ENCODE measurements at regions of chr2 and their contacts with region 1.

Region 1: GRCh38 chr2:196076778-196077568 is 8.3 kb upstream of the DNAH7 start:
- DNase-seq: no peak
- H3K4me3 ChIP-seq: no peak overlapping the region
- H3K27ac ChIP-seq: no peak overlapping the region
- H3K4me1 ChIP-seq: no peaks in the 10 kb centered on the region
- H3K27me3 ChIP-seq: peaks cover 7 to 12% of the 10 kb centered on the region in 2 experiments
- CTCF ChIP-seq: no peak
- POLR2A ChIP-seq: no peak

Region 2: GRCh38 chr2:194385376-194385775 is 1691.6 kb before region 1 on chr2:
- CTCF ChIA-PET with region 1: no interaction called
- POLR2A ChIA-PET with region 1: no interaction called
- dilution Hi-C with region 1: no loop called
- intact Hi-C with region 1: no loop called
- DNase-seq: no peak
- H3K4me3 ChIP-seq: no peak overlapping the region
- H3K27ac ChIP-seq: no peak overlapping the region
- H3K4me1 ChIP-seq: no peaks in the 10 kb centered on the region
- H3K27me3 ChIP-seq: no peaks in the 10 kb centered on the region
- CTCF ChIP-seq: no peak
- POLR2A ChIP-seq: no peak

Region 3: DNA sequence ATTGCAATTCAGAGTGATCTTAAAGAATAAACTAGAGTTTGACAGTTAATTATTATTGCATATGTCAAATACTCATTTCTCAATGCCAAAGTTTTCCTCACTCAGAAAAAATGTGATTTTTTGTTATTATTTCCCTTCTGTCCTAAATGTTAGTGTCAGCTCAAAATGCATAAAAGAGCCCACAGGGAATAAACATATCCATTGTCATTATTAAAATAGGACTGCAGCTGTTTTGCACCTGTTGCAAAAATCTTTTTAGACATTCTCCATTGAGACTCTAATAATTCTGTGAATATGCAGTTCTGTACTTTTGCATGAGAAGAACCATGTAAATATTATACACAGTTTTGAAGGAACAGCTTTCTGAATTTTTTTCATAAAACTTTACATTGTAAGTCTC is 960.0 kb before region 1 on chr2:
- CTCF ChIA-PET with region 1: no interaction called
- POLR2A ChIA-PET with region 1: no interaction called
- dilution Hi-C with region 1: no loop called
- intact Hi-C with region 1: no loop called
- DNase-seq: no peak
- H3K4me3 ChIP-seq: no peak overlapping the region
- H3K27ac ChIP-seq: no peak overlapping the region
- H3K4me1 ChIP-seq: no peaks in the 10 kb centered on the region
- H3K27me3 ChIP-seq: no peaks in the 10 kb centered on the region
- CTCF ChIP-seq: no peak
- POLR2A ChIP-seq: no peak

Region 4: GRCh38 chr2:195808189-195808588 is 268.8 kb before region 1 on chr2:
- CTCF ChIA-PET with region 1: no interaction called
- POLR2A ChIA-PET with region 1: no interaction called
- dilution Hi-C with region 1: no loop called
- intact Hi-C with region 1: no loop called
- DNase-seq: no peak
- H3K4me3 ChIP-seq: no peak overlapping the region
- H3K27ac ChIP-seq: no peak overlapping the region
- H3K4me1 ChIP-seq: no peaks in the 10 kb centered on the region
- H3K27me3 ChIP-seq: no peaks in the 10 kb centered on the region
- CTCF ChIP-seq: no peak
- POLR2A ChIP-seq: no peak

Region 5: GRCh38 chr2:195995499-195995898 is 81.5 kb before region 1 on chr2:
- CTCF ChIA-PET with region 1: no interaction called
- POLR2A ChIA-PET with region 1: no interaction called
- dilution Hi-C with region 1: no loop called
- intact Hi-C with region 1: no loop called
- DNase-seq: no peak
- H3K4me3 ChIP-seq: no peak overlapping the region
- H3K27ac ChIP-seq: no peak overlapping the region
- H3K4me1 ChIP-seq: no peaks in the 10 kb centered on the region
- H3K27me3 ChIP-seq: no peaks in the 10 kb centered on the region
- CTCF ChIP-seq: no peak
- POLR2A ChIP-seq: no peak

Region 6: GRCh38 chr2:196195758-196196157 is 118.8 kb after region 1 on chr2:
- CTCF ChIA-PET with region 1: interaction called, 5 read pairs
- POLR2A ChIA-PET with region 1: no interaction called
- dilution Hi-C with region 1: no loop called
- intact Hi-C with region 1: loop called (anchors 1 kb)
- DNase-seq: no peak
- H3K4me3 ChIP-seq: no peak overlapping the region
- H3K27ac ChIP-seq: no peak overlapping the region
- H3K4me1 ChIP-seq: no peaks in the 10 kb centered on the region
- H3K27me3 ChIP-seq: no peaks in the 10 kb centered on the region
- CTCF ChIP-seq: no peak
- POLR2A ChIP-seq: no peak

Region 7: GRCh38 chr2:196220671-196221070 is 143.7 kb after region 1 on chr2:
- CTCF ChIA-PET with region 1: interaction called, 13 read pairs
- POLR2A ChIA-PET with region 1: no interaction called
- dilution Hi-C with region 1: no loop called
- intact Hi-C with region 1: no loop called
- DNase-seq: no peak
- H3K4me3 ChIP-seq: no peak overlapping the region
- H3K27ac ChIP-seq: no peak overlapping the region
- H3K4me1 ChIP-seq: no peaks in the 10 kb centered on the region
- H3K27me3 ChIP-seq: no peaks in the 10 kb centered on the region
- CTCF ChIP-seq: no peak
- POLR2A ChIP-seq: no peak

Region 8: DNA sequence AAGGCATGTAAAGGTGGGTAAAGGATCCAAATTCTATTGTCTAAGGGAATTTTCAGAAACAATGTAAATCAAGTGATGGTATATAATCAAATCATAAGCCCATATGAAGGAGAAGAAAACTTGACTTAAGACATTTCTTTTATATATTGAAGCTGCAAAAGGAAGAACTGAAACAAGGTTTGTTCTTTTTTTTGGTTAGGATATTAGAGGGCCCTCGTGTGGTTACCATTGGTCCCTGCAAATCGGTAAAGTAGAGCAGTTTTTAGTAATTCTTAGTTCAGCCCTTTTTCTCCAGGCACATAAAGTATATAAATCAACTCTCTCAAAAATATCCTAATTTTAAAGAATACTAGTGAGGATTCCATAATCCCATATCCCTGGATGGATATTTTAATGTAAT is 200.0 kb after region 1 on chr2:
- CTCF ChIA-PET with region 1: interaction called, 59 read pairs
- POLR2A ChIA-PET with region 1: no interaction called
- dilution Hi-C with region 1: no loop called
- intact Hi-C with region 1: loop called (anchors 1 kb)
- DNase-seq: peak; percentile 46
- H3K4me3 ChIP-seq: peak overlapping the region in 2 of 3 experiments; percentile 38 to 60
- H3K27ac ChIP-seq: peak overlapping the region; percentile 14
- H3K4me1 ChIP-seq: peaks cover 58% of the 10 kb centered on the region
- H3K27me3 ChIP-seq: no peaks in the 10 kb centered on the region
- CTCF ChIP-seq: peak; percentile 32 to 41
- POLR2A ChIP-seq: no peak

Region 9: GRCh38 chr2:196399722-196400691 is 323.0 kb after region 1 on chr2:
- CTCF ChIA-PET with region 1: no interaction called
- POLR2A ChIA-PET with region 1: no interaction called
- dilution Hi-C with region 1: no loop called
- intact Hi-C with region 1: loop called (anchors 2 kb)
- DNase-seq: peak; percentile 97
- H3K4me3 ChIP-seq: no peak overlapping the region
- H3K27ac ChIP-seq: peak overlapping the region; percentile 94
- H3K4me1 ChIP-seq: peaks cover 58% of the 10 kb centered on the region
- H3K27me3 ChIP-seq: no peaks in the 10 kb centered on the region
- CTCF ChIP-seq: no peak
- POLR2A ChIP-seq: peak; percentile 66

Measured in endothelial cell of umbilical vein (primary cell).